ENCODE measurements at regions of chr7 and their contacts with region 1.

Region 1: DNA sequence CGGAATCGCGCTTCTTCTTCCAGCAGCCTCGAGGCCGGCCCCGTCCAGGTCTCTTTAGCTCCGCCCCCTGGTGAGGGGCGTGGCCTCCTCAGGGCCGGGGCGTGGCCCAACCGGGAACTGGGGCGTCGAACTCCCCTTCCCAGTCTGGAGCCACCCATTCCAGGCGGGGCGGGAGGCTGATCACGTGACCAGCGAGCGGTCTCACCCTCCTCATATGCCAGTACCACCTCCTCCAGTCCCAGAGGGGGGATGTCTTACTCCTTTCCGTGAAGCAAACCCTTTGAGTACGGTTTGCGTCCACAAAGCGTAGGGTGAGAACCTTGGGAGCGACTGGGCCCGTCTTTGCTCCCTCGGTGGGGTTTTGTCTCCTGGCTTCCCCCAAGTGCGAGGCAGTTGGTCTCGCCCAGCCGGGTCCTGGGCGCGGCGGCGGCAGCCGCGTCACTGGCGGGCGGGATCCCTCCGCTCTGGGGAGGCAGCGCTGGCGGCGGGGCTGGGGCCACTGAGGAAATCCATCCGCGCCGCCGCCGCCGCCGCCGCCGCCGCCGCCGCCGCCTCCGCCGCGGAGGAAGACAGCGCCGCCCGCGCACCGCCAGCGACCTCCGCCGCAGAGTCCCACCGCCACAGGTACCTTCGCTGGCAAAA is at the start of gene GNB2:
- DNase-seq: peak; percentile 99 to 100 (median 99)
- ATAC-seq: peak; percentile 81
- H3K4me3 ChIP-seq: peak within 1 kb of the TSS; percentile 99
- H3K27ac ChIP-seq: peak within 1 kb of the TSS; percentile 98
- H3K4me1 ChIP-seq: peaks cover 0 to 54% of the 10 kb centered on the region in 2 experiments; a peak in 4 of 5 replicates
- H3K27me3 ChIP-seq: no peaks in the 10 kb centered on the region
- CTCF ChIP-seq: 0 out of 6 replicates have a peak, but pooled peaks of 1 of the 3 experiments have one; percentile 4
- EP300 ChIP-seq: 0 out of 2 replicates have a peak, but pooled peaks have one; percentile 38
- POLR2A ChIP-seq: peak; percentile 57; the same call in 1 of the 2 replicates
- RAD21 ChIP-seq: peak in 1 of 2 experiments; percentile 28; a peak in 1 of 4 replicates
- polyA plus RNA-seq, gene GNB2: 0.65 to 5.2 TPM

Region 2: DNA sequence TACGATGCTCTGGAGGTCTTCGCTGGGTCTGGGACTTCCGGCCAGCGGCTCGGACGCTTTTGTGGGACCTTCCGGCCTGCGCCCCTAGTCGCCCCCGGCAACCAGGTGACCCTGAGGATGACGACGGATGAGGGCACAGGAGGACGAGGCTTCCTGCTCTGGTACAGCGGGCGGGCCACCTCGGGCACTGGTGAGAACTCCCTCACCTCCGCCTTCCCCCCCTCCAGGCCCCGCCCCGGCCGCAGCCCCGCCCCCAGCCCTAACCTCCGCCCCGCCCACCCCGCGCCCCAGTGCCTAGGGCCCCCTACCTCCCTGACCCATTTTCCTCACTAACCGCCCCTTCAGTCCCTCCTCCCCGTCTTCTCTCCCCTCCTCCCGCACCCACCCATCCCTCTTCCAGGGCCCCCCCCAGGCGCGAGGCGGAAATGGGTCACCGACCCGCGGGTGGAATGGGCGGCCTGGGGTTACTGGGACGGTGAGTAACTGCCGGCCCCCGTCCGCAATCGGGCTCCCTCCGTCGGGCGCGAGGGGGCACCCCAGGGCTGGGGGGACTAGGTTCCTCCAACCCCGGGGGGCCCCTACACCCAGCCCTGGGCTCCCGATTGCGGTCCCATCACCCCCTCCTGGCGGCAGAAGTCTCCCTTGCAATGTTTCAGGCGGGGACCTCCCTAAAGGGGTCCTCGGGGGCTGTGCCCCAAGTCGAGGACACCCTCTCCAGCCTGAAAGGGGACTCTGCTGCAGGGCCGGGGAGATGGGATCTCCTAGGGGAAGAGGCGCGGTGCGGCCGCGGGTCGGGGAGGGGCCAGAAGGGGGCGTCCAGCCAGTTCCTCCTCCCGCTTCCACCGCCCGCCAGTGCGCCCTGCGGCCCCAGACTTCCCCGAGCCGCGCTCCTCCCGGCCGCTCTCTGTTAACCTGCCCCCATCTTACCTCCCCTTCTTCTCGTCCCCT is 69.1 kb before region 1 on chr7:
- CTCF ChIA-PET with region 1: interaction called, 3 read pairs
- POLR2A ChIA-PET with region 1: interaction called, 3 read pairs
- in situ Hi-C with region 1: no loop called
- intact Hi-C with region 1: loop called (anchors 2 kb)
- DNase-seq: peak; percentile 93 to 97 (median 96)
- ATAC-seq: peak; percentile 91
- H3K4me3 ChIP-seq: peak overlapping the region; percentile 58
- H3K27ac ChIP-seq: peak overlapping the region; percentile 54
- H3K4me1 ChIP-seq: peaks cover 35 to 65% of the 10 kb centered on the region in 2 experiments
- H3K27me3 ChIP-seq: no peaks in the 10 kb centered on the region
- CTCF ChIP-seq: peak; percentile 50 to 75 (median 65); a peak in 5 of 6 replicates
- EP300 ChIP-seq: 0 out of 2 replicates have a peak, but pooled peaks have one; percentile 14
- POLR2A ChIP-seq: peak; percentile 40
- RAD21 ChIP-seq: peak; percentile 65

Region 3: GRCh38 chr7:100611974-100612729 is 61.3 kb before region 1 on chr7 and contains the start of gene MOSPD3:
- CTCF ChIA-PET with region 1: no interaction called
- POLR2A ChIA-PET with region 1: interaction called, 5 read pairs
- in situ Hi-C with region 1: no loop called
- intact Hi-C with region 1: loop called (anchors 1 kb)
- DNase-seq: peak; percentile 99 to 100 (median 100)
- ATAC-seq: peak; percentile 98
- H3K4me3 ChIP-seq: peak within 1 kb of the TSS; percentile 52
- H3K27ac ChIP-seq: peak within 1 kb of the TSS; percentile 78
- H3K4me1 ChIP-seq: peaks cover 19 to 28% of the 10 kb centered on the region in 2 experiments; a peak in 4 of 5 replicates
- H3K27me3 ChIP-seq: no peaks in the 10 kb centered on the region
- CTCF ChIP-seq: 0 out of 6 replicates have a peak, but pooled peaks of 1 of the 3 experiments have one; percentile 1
- EP300 ChIP-seq: peak; percentile 25; the same call in 1 of the 2 replicates
- POLR2A ChIP-seq: peak; percentile 97
- RAD21 ChIP-seq: no peak; a peak in 1 of 4 replicates
- polyA plus RNA-seq, gene MOSPD3: 1.4 to 2.6 TPM

Region 4: GRCh38 chr7:100626530-100627237 is 46.7 kb before region 1 on chr7:
- CTCF ChIA-PET with region 1: no interaction called
- POLR2A ChIA-PET with region 1: interaction called, 5 read pairs
- in situ Hi-C with region 1: no loop called
- intact Hi-C with region 1: loop called (anchors 5 kb)
- DNase-seq: peak; percentile 92 to 99 (median 99)
- ATAC-seq: peak; percentile 96
- H3K4me3 ChIP-seq: peak overlapping the region; percentile 41; the same call in 1 of the 2 replicates
- H3K27ac ChIP-seq: peak overlapping the region; percentile 74; the same call in 2 of the 3 replicates
- H3K4me1 ChIP-seq: peaks cover 15 to 41% of the 10 kb centered on the region in 2 experiments
- H3K27me3 ChIP-seq: no peaks in the 10 kb centered on the region
- CTCF ChIP-seq: no peak
- EP300 ChIP-seq: no peak; the same call in 1 of the 2 replicates
- POLR2A ChIP-seq: peak; percentile 71; the same call in 1 of the 2 replicates
- RAD21 ChIP-seq: no peak

Region 5: DNA sequence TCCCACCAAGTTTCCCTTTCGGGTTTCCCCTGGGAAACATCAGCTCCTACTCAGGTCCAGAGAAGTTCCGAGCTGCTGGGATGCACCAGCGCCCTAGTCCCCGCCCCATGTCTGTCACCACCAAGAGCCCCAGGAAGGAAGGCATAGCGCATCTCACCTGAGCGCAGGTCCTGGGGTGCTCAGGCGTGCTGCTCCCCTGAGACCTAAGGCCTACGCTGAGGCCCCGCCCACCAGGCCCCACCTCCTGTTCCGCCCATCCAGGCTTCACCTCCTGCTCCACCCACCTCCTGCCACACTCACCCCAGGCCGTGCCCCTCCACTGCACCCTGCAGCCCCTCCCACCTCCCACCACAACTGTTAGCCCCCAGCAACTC is 30.9 kb before region 1 on chr7:
- CTCF ChIA-PET with region 1: no interaction called
- POLR2A ChIA-PET with region 1: interaction called, 5 read pairs
- in situ Hi-C with region 1: no loop called
- intact Hi-C with region 1: loop called (anchors 1 kb)
- DNase-seq: peak; percentile 92 to 98 (median 96)
- ATAC-seq: peak; percentile 80
- H3K4me3 ChIP-seq: peak overlapping the region; percentile 55
- H3K27ac ChIP-seq: peak overlapping the region; percentile 98
- H3K4me1 ChIP-seq: peaks cover 25 to 55% of the 10 kb centered on the region in 2 experiments
- H3K27me3 ChIP-seq: no peaks in the 10 kb centered on the region
- CTCF ChIP-seq: 0 out of 6 replicates have a peak, but pooled peaks of 1 of the 3 experiments have one; percentile 1
- EP300 ChIP-seq: no peak
- POLR2A ChIP-seq: peak; percentile 76
- RAD21 ChIP-seq: no peak

Region 6: GRCh38 chr7:100889761-100890634 is 216.6 kb after region 1 on chr7:
- CTCF ChIA-PET with region 1: no interaction called
- POLR2A ChIA-PET with region 1: no interaction called
- in situ Hi-C with region 1: no loop called
- intact Hi-C with region 1: no loop called
- DNase-seq: peak; percentile 96 to 100 (median 97)
- ATAC-seq: peak; percentile 88
- H3K4me3 ChIP-seq: peak overlapping the region; percentile 54
- H3K27ac ChIP-seq: peak overlapping the region; percentile 77
- H3K4me1 ChIP-seq: peaks cover 33 to 91% of the 10 kb centered on the region in 2 experiments
- H3K27me3 ChIP-seq: no peaks in the 10 kb centered on the region
- CTCF ChIP-seq: no peak
- EP300 ChIP-seq: no peak
- POLR2A ChIP-seq: peak; percentile 89
- RAD21 ChIP-seq: no peak

Region 7: DNA sequence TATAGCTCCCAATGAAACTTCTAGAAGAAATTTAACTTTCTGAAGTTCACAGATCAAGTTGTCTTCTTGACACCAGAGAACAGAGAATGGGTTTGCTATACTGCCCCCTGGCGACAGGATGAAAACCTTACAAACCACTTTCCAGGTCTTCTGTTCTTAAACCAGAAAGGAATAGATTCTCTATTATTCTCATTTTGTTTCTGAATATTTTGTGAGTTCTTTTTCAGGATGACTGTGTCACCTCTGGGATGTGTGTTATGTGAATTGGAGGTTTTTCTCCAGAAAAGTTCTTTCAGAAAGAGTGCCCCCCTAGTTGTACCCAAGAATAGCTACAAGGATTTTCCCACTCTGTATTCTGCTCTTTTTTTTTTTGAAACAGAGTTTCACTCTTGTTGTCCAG is 641.9 kb after region 1 on chr7:
- CTCF ChIA-PET with region 1: no interaction called
- POLR2A ChIA-PET with region 1: no interaction called
- in situ Hi-C with region 1: no loop called
- intact Hi-C with region 1: no loop called
- DNase-seq: peak; percentile 53 to 77 (median 58)
- ATAC-seq: peak; percentile 79
- H3K4me3 ChIP-seq: no peak overlapping the region
- H3K27ac ChIP-seq: no peak overlapping the region
- H3K4me1 ChIP-seq: no peaks in the 10 kb centered on the region
- H3K27me3 ChIP-seq: no peaks in the 10 kb centered on the region
- CTCF ChIP-seq: peak; percentile 68 to 72 (median 71)
- EP300 ChIP-seq: no peak
- POLR2A ChIP-seq: no peak
- RAD21 ChIP-seq: peak in 1 of 2 experiments; percentile 35; a peak in 2 of 4 replicates

Region 8: GRCh38 chr7:101347477-101347876 is 674.1 kb after region 1 on chr7:
- CTCF ChIA-PET with region 1: no interaction called
- POLR2A ChIA-PET with region 1: no interaction called
- in situ Hi-C with region 1: no loop called
- intact Hi-C with region 1: no loop called
- DNase-seq: no peak
- ATAC-seq: no peak
- H3K4me3 ChIP-seq: no peak overlapping the region
- H3K27ac ChIP-seq: no peak overlapping the region
- H3K4me1 ChIP-seq: peaks cover 7 to 13% of the 10 kb centered on the region in 2 experiments; a peak in 4 of 5 replicates
- H3K27me3 ChIP-seq: peaks cover 7 to 37% of the 10 kb centered on the region in 2 experiments
- CTCF ChIP-seq: no peak
- EP300 ChIP-seq: no peak
- POLR2A ChIP-seq: no peak
- RAD21 ChIP-seq: no peak

Measured in K562 (cell line).